ENCODE measurements at regions of chr6 and their contacts with region 1.

Region 1: GRCh38 chr6:127516666-127517273 is 2.4 kb downstream of the MTCL3 start:
- DNase-seq: peak; percentile 42
- H3K4me3 Mint-ChIP-seq: peak overlapping the region; percentile 63
- H3K27ac Mint-ChIP-seq: no peak overlapping the region
- H3K4me1 Mint-ChIP-seq: peaks cover 12% of the 10 kb centered on the region
- H3K27me3 Mint-ChIP-seq: peaks cover 62% of the 10 kb centered on the region
- CTCF ChIP-seq: peak; percentile 58

Region 2: DNA sequence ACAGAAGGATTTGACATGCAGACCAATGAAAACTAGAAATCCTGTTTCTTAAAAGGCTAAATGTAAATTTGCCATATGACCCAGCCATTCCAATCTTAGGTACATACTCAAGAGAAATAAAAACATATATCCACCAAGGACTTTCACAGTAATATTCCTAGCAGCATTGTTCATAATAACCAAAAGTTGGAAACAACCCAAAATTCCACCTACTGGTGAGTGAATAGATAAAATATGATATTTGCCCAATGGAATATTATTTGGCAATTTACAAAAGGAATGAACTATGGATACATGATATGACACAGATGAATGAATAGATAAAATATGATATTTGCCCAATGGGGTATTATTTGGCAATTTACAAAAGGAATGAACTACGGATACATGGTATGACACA is 20.3 kb before region 1 on chr6:
- CTCF ChIA-PET with region 1: interaction called, 14 read pairs
- POLR2A ChIA-PET with region 1: no interaction called
- intact Hi-C with region 1: no loop called
- DNase-seq: peak; percentile 48
- H3K4me3 Mint-ChIP-seq: no peak overlapping the region
- H3K27ac Mint-ChIP-seq: no peak overlapping the region
- H3K4me1 Mint-ChIP-seq: no peaks in the 10 kb centered on the region
- H3K27me3 Mint-ChIP-seq: peaks cover 18% of the 10 kb centered on the region
- CTCF ChIP-seq: peak; percentile 8

Region 3: DNA sequence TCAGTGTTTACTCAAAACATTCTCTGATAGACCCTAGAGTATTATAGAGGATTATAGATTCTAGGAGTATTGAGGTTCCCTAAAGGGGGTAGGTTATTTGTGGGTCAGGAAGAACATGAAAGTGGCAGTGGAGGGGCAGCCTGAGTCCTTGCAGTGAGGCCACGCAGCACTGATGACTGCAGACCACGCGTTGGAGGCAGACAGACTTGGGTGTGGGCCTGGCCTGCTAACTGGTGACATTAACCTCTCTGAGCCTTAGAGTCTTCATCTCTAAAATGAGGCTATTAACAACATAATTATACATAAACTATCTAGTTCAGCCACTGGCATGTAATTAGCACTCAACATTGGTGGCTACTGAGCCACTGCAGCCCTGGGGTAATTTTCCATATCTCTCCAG is 13.7 kb before region 1 on chr6:
- CTCF ChIA-PET with region 1: interaction called, 17 read pairs
- POLR2A ChIA-PET with region 1: interaction called, 3 read pairs
- intact Hi-C with region 1: no loop called
- DNase-seq: no peak
- H3K4me3 Mint-ChIP-seq: no peak overlapping the region
- H3K27ac Mint-ChIP-seq: no peak overlapping the region
- H3K4me1 Mint-ChIP-seq: no peaks in the 10 kb centered on the region
- H3K27me3 Mint-ChIP-seq: peaks cover under 1% of the 10 kb centered on the region
- CTCF ChIP-seq: no peak

Region 4: GRCh38 chr6:127533011-127533410 is 16.2 kb after region 1 on chr6:
- CTCF ChIA-PET with region 1: interaction called, 20 read pairs
- POLR2A ChIA-PET with region 1: interaction called, 4 read pairs
- intact Hi-C with region 1: no loop called
- DNase-seq: peak; percentile 39
- H3K4me3 Mint-ChIP-seq: no peak overlapping the region
- H3K27ac Mint-ChIP-seq: no peak overlapping the region
- H3K4me1 Mint-ChIP-seq: no peaks in the 10 kb centered on the region
- H3K27me3 Mint-ChIP-seq: peaks cover 33% of the 10 kb centered on the region
- CTCF ChIP-seq: no peak

Region 5: DNA sequence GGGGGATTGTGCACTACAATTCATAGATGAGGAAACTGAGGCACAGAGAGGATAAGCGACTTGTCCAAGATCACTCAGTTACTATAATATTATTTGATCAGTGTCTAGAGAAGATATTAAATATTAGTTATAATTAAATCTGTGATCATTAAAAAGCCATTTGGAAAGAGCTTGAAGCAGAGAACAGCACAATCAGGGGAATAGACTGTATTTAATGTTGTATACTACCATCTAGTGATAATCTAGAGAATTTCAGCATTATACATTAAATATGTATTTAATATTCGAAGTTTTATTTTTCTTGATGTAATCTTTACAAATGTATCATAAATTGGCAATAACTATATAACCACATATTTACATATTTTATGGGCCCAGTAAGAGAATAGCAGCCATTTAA is 22.5 kb after region 1 on chr6:
- CTCF ChIA-PET with region 1: interaction called, 20 read pairs
- POLR2A ChIA-PET with region 1: no interaction called
- intact Hi-C with region 1: no loop called
- DNase-seq: peak; percentile 14
- H3K4me3 Mint-ChIP-seq: no peak overlapping the region
- H3K27ac Mint-ChIP-seq: no peak overlapping the region
- H3K4me1 Mint-ChIP-seq: peaks cover 5% of the 10 kb centered on the region
- H3K27me3 Mint-ChIP-seq: peaks cover 36% of the 10 kb centered on the region
- CTCF ChIP-seq: peak; percentile 27

Region 6: GRCh38 chr6:127547215-127547614 is 30.4 kb after region 1 on chr6:
- CTCF ChIA-PET with region 1: interaction called, 16 read pairs
- POLR2A ChIA-PET with region 1: no interaction called
- intact Hi-C with region 1: no loop called
- DNase-seq: no peak
- H3K4me3 Mint-ChIP-seq: no peak overlapping the region
- H3K27ac Mint-ChIP-seq: no peak overlapping the region
- H3K4me1 Mint-ChIP-seq: peaks cover 6% of the 10 kb centered on the region
- H3K27me3 Mint-ChIP-seq: peaks cover 22% of the 10 kb centered on the region
- CTCF ChIP-seq: no peak

Region 7: GRCh38 chr6:127606131-127606562 is 89.4 kb after region 1 on chr6:
- CTCF ChIA-PET with region 1: no interaction called
- POLR2A ChIA-PET with region 1: no interaction called
- intact Hi-C with region 1: no loop called
- DNase-seq: peak; percentile 61
- H3K4me3 Mint-ChIP-seq: no peak overlapping the region
- H3K27ac Mint-ChIP-seq: no peak overlapping the region
- H3K4me1 Mint-ChIP-seq: no peaks in the 10 kb centered on the region
- H3K27me3 Mint-ChIP-seq: no peaks in the 10 kb centered on the region
- CTCF ChIP-seq: peak; percentile 47

Measured in MCF 10A (cell line).